ENCODE measurements at regions of chr2 and their contacts with region 1.

Region 1: GRCh38 chr2:112777036-112777435 is 7.3 kb downstream of the IL1A start:
- DNase-seq: no peak
- H3K4me3 Mint-ChIP-seq: peak overlapping the region; percentile 30
- H3K27ac Mint-ChIP-seq: peak overlapping the region; percentile 81
- H3K4me1 Mint-ChIP-seq: peaks cover 17% of the 10 kb centered on the region
- H3K27me3 Mint-ChIP-seq: peaks cover 29% of the 10 kb centered on the region

Region 2: DNA sequence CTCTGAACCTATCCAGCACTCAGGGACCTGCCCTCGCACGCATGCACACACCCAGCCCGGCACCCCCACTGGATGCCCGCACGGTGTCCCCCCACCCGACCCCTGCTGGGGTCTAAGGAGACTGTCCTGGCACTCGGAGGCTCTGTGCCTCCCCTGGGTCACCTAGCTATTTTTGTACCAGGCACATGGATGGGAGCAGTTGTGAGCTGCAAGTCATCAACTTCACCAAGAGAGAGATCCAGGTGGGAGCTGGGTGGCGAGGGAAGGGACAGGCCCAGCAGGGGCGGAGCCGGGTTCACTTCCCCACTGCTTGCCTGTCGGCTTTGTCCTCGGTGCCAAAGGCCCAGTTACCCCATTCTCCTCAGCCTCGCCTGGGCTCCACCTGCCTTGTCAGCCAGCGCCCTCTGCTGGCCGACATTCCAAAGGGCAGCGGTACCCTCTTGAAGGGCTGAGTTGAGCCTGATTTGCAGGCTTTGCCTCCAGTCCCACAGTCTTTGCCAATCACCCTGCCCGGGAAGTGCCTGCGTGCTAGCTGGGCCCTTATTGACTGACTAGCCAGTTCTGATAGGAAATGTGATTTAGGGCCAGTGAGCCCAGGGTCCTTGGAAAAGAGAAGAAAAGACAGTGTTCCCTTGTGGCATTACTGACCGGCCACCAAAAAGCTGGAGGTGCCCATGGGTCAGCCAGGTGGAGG is 50.4 kb before region 1 on chr2:
- intact Hi-C with region 1: no loop called
- DNase-seq: peak; percentile 97
- H3K4me3 Mint-ChIP-seq: no peak overlapping the region
- H3K27ac Mint-ChIP-seq: peak overlapping the region; percentile 32
- H3K4me1 Mint-ChIP-seq: peaks cover 25% of the 10 kb centered on the region
- H3K27me3 Mint-ChIP-seq: peaks cover 2% of the 10 kb centered on the region

Region 3: GRCh38 chr2:112794131-112794733 is 17.2 kb after region 1 on chr2:
- intact Hi-C with region 1: loop called (anchors 2 kb)
- DNase-seq: peak; percentile 72
- H3K4me3 Mint-ChIP-seq: no peak overlapping the region
- H3K27ac Mint-ChIP-seq: peak overlapping the region; percentile 17
- H3K4me1 Mint-ChIP-seq: peaks cover 21% of the 10 kb centered on the region
- H3K27me3 Mint-ChIP-seq: no peaks in the 10 kb centered on the region

Region 4: GRCh38 chr2:112910219-112910618 is 133.2 kb after region 1 on chr2:
- intact Hi-C with region 1: no loop called
- DNase-seq: no peak
- H3K4me3 Mint-ChIP-seq: no peak overlapping the region
- H3K27ac Mint-ChIP-seq: no peak overlapping the region
- H3K4me1 Mint-ChIP-seq: peaks cover 7% of the 10 kb centered on the region
- H3K27me3 Mint-ChIP-seq: peaks cover 2% of the 10 kb centered on the region